Cardiac septum (tissue), 1 donor: ENCODE measurements at regions of chr1 and their contacts with region 1.

Region 1: DNA sequence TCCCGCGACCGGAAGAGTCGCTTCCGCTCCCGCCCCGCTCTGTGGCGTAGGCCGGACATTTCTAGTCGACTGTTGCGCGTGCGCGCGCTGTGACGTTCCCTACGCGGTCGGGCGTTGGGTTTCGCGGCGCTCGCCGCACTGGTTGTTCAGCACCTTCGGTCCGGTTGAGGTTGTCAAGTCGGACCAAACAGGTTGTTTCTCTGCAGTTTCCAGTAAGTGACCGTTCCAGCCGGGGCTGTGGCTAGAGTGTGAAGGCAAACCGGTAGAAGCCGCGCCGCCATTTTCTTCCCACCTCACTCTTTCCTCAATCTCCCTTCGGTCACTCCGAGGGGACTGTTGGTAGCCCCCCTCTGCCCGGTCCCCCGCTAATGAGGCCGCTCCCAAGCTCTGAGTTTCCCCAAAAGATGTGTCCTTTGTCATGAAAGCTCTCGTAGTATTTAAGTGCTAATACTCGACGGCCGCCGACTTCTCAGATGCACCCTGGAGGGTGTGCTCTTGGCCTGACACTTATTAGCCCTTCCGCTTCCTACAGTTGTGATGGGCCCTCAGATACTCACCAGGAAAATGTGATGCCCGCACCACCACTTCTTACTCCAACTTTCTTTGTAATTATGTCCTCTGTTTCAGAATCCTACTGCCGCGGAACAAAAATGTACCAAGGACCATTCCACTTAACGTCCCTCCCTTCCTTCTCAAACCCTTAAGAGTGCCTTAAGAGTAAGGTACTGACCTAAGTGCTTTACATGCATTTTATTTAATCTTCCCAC is 56.3 kb downstream of the TRAF5 start:
- DNase-seq: peak; percentile 99

Region 2: GRCh38 chr1:211111351-211111750 is 271.5 kb before region 1 on chr1:
- intact Hi-C with region 1: no loop called
- DNase-seq: no peak

Region 3: GRCh38 chr1:211415700-211416099 is 32.8 kb after region 1 on chr1:
- intact Hi-C with region 1: loop called (anchors 5 kb)
- DNase-seq: no peak